Activated CD4-positive, alpha-beta memory T cell treated with anti-CD3 and anti-CD28 coated beads for 36 hours (primary cell): ENCODE measurements at regions of chr14 and their contacts with region 1.

Region 1: DNA sequence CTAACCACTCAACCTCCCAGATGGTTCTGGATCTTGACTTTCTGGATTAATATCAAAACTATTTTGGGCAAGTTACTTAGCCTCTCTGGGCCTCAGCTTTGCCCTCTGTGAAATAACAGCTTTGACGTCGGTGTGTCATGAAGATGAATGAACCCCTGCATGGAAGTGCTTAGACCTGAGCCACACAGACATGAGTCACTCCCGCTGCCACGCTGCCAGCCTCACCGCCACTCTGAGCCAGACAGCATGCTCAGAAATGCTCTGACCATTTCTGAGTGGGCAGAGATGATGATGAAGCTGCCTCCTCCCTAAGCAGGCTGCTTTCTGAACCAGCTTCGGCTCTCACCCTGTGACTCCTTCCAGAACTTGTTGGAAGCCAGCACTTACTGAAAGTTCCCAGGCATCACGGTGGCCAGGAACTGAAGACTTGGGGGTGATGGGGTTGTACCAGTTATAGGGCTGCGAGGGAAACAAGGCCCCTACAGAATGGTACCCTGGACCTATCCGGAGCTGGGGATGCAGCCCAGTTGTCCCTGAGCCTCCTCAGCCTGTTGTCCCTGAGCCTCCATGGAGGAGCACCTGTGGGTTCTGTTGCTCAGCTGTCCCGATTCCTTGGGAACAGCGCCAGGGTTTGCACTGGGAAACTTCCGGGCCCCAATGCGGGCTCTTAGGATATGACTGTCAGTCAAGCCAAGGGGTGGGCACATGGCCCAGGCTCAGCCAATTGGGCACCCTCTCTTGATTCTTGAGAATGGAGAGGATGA is 2.0 kb upstream of the CCDC197 start:
- DNase-seq: peak; percentile 86
- H3K4me3 Mint-ChIP-seq: no peak overlapping the region
- H3K27ac Mint-ChIP-seq: peak overlapping the region; percentile 54
- H3K4me1 Mint-ChIP-seq: peaks cover 35% of the 10 kb centered on the region
- H3K27me3 Mint-ChIP-seq: no peaks in the 10 kb centered on the region

Region 2: GRCh38 chr14:93245764-93246420 is 749.2 kb before region 1 on chr14:
- CTCF ChIA-PET with region 1: no interaction called
- POLR2A ChIA-PET with region 1: no interaction called
- intact Hi-C with region 1: no loop called
- DNase-seq: no peak
- H3K4me3 Mint-ChIP-seq: no peak overlapping the region
- H3K27ac Mint-ChIP-seq: no peak overlapping the region
- H3K4me1 Mint-ChIP-seq: no peaks in the 10 kb centered on the region
- H3K27me3 Mint-ChIP-seq: no peaks in the 10 kb centered on the region

Region 3: DNA sequence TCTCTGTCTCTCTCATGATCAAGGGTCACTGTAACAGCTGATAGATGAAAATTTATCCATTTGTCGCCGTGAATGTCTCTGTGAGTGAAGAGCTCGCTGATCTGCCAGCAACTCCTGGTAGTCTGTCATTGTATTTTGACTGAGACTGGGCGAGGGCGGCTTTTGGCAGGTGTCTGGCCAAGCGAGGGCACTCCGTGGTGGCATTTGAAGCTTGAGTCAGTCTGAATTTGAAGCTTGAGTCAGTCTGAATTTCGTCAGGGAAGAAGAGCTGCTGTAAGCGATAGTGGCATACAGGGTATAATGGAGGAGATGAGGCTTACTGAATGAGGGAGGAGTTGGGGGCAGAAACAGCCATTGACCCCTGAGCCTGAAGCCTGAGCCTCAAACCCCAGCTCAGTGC is 124.7 kb before region 1 on chr14:
- CTCF ChIA-PET with region 1: no interaction called
- POLR2A ChIA-PET with region 1: no interaction called
- intact Hi-C with region 1: no loop called
- DNase-seq: no peak
- H3K4me3 Mint-ChIP-seq: no peak overlapping the region
- H3K27ac Mint-ChIP-seq: no peak overlapping the region
- H3K4me1 Mint-ChIP-seq: no peaks in the 10 kb centered on the region
- H3K27me3 Mint-ChIP-seq: peaks cover 20% of the 10 kb centered on the region

Region 4: GRCh38 chr14:93975791-93976476 is 19.2 kb before region 1 on chr14:
- CTCF ChIA-PET with region 1: interaction called, 47 read pairs
- POLR2A ChIA-PET with region 1: interaction called, 12 read pairs
- intact Hi-C with region 1: loop called (anchors 1 kb)
- DNase-seq: peak; percentile 70
- H3K4me3 Mint-ChIP-seq: peak overlapping the region; percentile 75
- H3K27ac Mint-ChIP-seq: peak overlapping the region; percentile 98
- H3K4me1 Mint-ChIP-seq: peaks cover 97% of the 10 kb centered on the region
- H3K27me3 Mint-ChIP-seq: no peaks in the 10 kb centered on the region